ENCODE measurements at regions of chr14 and their contacts with region 1.

Region 1: DNA sequence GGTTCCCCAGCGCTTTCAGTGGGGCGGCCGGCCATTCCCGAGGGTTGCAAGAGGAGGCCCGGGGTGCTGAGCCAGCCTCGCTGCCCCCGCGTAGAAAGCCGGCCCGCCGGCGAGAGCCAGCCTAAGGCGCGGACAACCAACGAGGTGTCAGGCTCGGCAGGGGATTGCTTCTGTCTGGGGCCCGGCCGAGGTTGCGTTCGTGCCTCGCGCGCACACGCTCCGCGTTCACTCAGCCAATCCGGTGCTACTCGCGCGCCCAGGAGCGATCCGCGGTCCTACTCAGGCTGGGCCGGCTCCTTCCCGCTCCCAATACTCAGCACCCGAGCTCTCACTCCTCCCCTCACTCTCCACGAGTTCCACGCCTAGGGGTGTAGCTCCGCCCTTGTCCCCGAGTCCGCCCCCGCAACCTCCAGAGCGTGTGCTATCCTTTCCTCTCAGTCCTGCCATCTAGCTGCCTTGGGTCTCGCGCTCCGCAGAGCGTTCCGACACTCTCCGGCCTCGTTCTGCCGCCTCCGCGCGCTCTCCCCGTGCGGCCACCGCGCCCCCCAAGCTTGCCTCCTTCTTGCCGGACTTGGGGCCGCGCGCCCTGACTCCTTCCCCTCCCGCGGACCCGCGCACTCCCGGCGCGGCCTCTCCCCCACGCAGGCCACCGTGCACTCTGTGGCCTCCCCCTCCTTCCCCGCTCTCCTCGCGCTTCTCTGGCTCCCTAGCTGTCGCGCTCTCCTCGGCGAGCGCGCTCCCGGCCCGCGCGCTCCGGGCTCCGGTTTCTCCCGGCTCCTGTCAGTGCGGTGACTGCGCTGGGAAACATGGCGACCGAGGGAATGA is at the start of gene GPHN:
- DNase-seq: peak; percentile 90
- H3K4me3 Mint-ChIP-seq: peak within 1 kb of the TSS; percentile 93
- H3K27ac Mint-ChIP-seq: peak within 1 kb of the TSS; percentile 96
- H3K4me1 Mint-ChIP-seq: peaks cover 36% of the 10 kb centered on the region
- H3K27me3 Mint-ChIP-seq: peaks cover 22% of the 10 kb centered on the region
- total RNA-seq, gene GPHN: 38.5 and 43.5 TPM in 2 replicates

Region 2: GRCh38 chr14:65102441-65103149 is 1405.3 kb before region 1 on chr14 and contains the start of gene MAX:
- intact Hi-C with region 1: loop called (anchors 5 kb)
- DNase-seq: peak; percentile 98
- H3K4me3 Mint-ChIP-seq: peak within 1 kb of the TSS; percentile 95
- H3K27ac Mint-ChIP-seq: peak within 1 kb of the TSS; percentile 95
- H3K4me1 Mint-ChIP-seq: peaks cover 33% of the 10 kb centered on the region
- H3K27me3 Mint-ChIP-seq: peaks cover 6% of the 10 kb centered on the region
- total RNA-seq, gene MAX: 135 and 137 TPM in 2 replicates

Region 3: DNA sequence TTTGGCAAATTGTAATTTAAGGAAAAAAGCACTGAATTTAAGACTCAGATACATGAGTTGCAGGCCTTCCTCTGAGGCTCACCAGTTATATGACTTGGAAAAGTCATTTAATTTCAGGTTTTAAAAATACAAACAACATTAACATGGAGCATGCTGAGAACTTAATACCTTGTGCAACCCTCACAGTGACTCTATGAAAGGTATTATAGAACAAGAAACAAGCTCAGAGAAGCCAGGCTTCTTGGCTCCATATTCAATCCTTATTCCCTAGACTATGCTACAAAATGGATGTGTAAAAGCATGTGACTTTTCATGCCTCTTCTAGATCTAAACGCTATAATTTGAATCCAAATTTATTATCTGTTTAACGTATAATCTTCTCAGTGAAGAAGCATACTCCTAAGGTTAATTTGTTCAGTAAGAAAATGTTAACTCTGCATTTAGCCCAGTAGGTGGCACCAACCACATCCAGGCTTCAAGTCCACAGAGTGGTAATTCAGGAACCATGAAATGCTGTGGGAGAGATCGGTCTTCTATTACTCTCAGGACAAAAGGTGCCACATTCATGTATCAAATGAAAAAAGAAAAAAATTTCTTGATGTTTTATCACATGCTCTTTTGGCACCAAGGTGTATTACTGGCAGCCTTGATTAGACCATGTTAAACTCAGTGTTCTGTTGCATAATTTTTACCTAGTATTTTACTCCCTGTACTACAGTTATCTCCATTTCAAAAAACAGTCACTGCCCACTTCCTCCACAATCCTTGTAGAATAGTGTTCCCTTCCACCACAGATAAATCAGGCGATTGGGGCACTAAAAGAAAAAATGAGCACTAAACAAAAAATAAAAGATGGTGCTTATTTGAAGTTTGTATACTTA is 12.5 kb before region 1 on chr14:
- intact Hi-C with region 1: loop called (anchors 1 kb)
- DNase-seq: peak; percentile 12
- H3K4me3 Mint-ChIP-seq: no peak overlapping the region
- H3K27ac Mint-ChIP-seq: no peak overlapping the region
- H3K4me1 Mint-ChIP-seq: peaks cover 19% of the 10 kb centered on the region
- H3K27me3 Mint-ChIP-seq: peaks cover 22% of the 10 kb centered on the region

Region 4: GRCh38 chr14:66998013-66998412 is 490.1 kb after region 1 on chr14:
- intact Hi-C with region 1: loop called (anchors 10 kb)
- DNase-seq: no peak
- H3K4me3 Mint-ChIP-seq: no peak overlapping the region
- H3K27ac Mint-ChIP-seq: no peak overlapping the region
- H3K4me1 Mint-ChIP-seq: peaks cover 12% of the 10 kb centered on the region
- H3K27me3 Mint-ChIP-seq: no peaks in the 10 kb centered on the region

Region 5: GRCh38 chr14:67240978-67241414 is 733.1 kb after region 1 on chr14:
- intact Hi-C with region 1: loop called (anchors 1 kb)
- DNase-seq: peak; percentile 92
- H3K4me3 Mint-ChIP-seq: peak overlapping the region; percentile 87
- H3K27ac Mint-ChIP-seq: peak overlapping the region; percentile 80
- H3K4me1 Mint-ChIP-seq: peaks cover 18% of the 10 kb centered on the region
- H3K27me3 Mint-ChIP-seq: peaks cover 20% of the 10 kb centered on the region

Region 6: DNA sequence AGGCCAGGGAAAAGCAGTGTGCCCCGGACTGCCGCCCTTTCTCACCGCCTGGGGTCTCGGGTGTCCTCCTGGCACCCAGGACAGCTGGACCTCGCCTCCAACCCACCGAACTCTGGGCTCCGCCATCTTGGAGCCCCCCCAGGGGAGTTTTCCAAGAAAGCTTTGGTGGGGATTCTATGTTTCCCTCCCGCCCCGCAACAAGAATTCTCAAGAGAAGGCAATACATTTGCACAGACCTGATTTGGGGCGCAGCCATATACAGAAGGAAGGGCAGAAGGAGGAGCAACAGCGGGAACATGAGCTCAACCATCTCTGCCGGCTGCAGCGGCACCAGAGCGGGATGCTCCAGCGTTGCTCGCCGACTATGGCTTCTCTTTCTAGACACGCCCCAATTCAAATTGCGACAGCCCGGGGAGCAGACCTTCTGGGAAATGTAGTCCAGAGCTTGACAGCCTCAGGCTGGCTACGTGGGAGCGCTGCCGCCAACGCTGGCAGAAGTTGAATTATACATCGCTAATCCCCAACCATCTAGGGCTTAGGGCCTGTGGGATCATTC is 1187.5 kb after region 1 on chr14 and contains the start of gene RDH11:
- intact Hi-C with region 1: loop called (anchors 2 kb)
- DNase-seq: peak; percentile 80
- H3K4me3 Mint-ChIP-seq: peak within 1 kb of the TSS; percentile 95
- H3K27ac Mint-ChIP-seq: peak within 1 kb of the TSS; percentile 98
- H3K4me1 Mint-ChIP-seq: peaks cover 42% of the 10 kb centered on the region
- H3K27me3 Mint-ChIP-seq: no peaks in the 10 kb centered on the region
- total RNA-seq, gene RDH11: 63.2 and 66.1 TPM in 2 replicates

Measured in activated T-helper 1 cell treated with anti-CD3 and anti-CD28 coated beads, Interleukin-12 subunit alpha, Interleukin-12 subunit beta, Interleukin-2, Interleukin-4 antibody, amounts not matched to agents 30 ng/mL and 10 ng/mL and 1 ng/mL, durations not matched to agents 14 hours and 24 hours and 36 hours (primary cell).